ENCODE measurements at regions of chr11 and their contacts with region 1.

Region 1: DNA sequence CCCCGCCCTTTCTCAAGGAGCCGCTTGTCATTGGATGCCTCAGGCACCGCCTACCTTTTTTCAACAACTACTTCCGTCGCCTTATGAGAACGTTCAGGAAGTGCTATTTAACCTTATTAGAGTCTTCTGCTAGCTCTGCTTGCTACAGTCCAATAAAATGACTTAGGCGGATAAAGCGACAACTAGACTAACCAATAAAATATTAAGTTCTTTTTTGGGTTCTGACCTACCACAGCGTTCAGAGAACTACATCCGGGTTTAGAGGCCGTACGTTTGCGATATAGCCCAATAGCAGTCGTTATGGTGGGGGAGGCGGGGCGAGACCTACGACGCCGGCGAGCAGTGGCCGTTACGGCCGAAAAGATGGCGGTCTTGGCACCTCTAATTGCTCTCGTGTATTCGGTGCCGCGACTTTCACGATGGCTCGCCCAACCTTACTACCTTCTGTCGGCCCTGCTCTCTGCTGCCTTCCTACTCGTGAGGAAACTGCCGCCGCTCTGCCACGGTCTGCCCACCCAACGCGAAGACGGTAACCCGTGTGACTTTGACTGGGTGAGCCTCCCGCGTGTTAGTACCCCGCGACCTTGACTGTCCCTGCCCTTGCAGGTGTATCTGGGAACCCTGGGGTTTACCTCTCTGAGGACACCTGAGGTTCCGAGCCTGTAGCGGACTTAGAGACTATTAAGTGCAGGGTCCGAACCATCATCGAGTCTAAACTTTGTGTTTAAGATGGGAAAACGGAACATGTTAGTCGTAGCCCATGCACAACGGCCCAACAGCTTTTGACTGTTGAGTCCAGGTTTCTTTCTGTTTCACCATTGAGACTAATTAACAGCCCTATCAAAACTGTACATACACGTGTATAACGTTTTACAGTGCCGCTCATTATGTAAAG is at the start of gene TMX2:
- DNase-seq: peak; percentile 80 to 97
- H3K4me3 ChIP-seq: peak within 1 kb of the TSS; percentile 79 to 85
- H3K27ac ChIP-seq: peak within 1 kb of the TSS; percentile 82 to 89
- H3K4me1 ChIP-seq: peaks cover 16 to 29% of the 10 kb centered on the region in 2 donors
- H3K27me3 ChIP-seq: no peaks in the 10 kb centered on the region
- CTCF ChIP-seq: no peak
- total RNA-seq, gene TMX2: 65.3 TPM

Region 2: GRCh38 chr11:57523419-57523818 is 189.1 kb before region 1 on chr11:
- intact Hi-C with region 1: no loop called
- DNase-seq: no peak
- H3K4me3 ChIP-seq: no peak overlapping the region
- H3K27ac ChIP-seq: no peak overlapping the region
- H3K4me1 ChIP-seq: no peaks in the 10 kb centered on the region
- H3K27me3 ChIP-seq: no peaks in the 10 kb centered on the region
- CTCF ChIP-seq: no peak

Region 3: GRCh38 chr11:57567515-57568329 is 144.8 kb before region 1 on chr11 and contains the start of gene UBE2L6:
- intact Hi-C with region 1: loop called (anchors 1 kb)
- DNase-seq: peak; percentile 16 to 72
- H3K4me3 ChIP-seq: peak within 1 kb of the TSS; percentile 84 to 93
- H3K27ac ChIP-seq: peak within 1 kb of the TSS; percentile 78 to 82
- H3K4me1 ChIP-seq: peaks cover 6 to 20% of the 10 kb centered on the region in 2 donors
- H3K27me3 ChIP-seq: no peaks in the 10 kb centered on the region
- CTCF ChIP-seq: peak in 1 of 3 experiments; percentile 90
- total RNA-seq, gene UBE2L6: 44.9 TPM

Region 4: GRCh38 chr11:57657194-57658022 is 55.1 kb before region 1 on chr11 and contains the start of gene CLP1:
- intact Hi-C with region 1: loop called (anchors 2 kb)
- DNase-seq: peak; percentile 98 to 100
- H3K4me3 ChIP-seq: peak within 1 kb of the TSS; percentile 67 to 70
- H3K27ac ChIP-seq: peak within 1 kb of the TSS; percentile 87 to 88
- H3K4me1 ChIP-seq: peaks cover 0 to 6% of the 10 kb centered on the region in 2 donors
- H3K27me3 ChIP-seq: no peaks in the 10 kb centered on the region
- CTCF ChIP-seq: no peak
- total RNA-seq, gene CLP1: 1.2 TPM

Region 5: DNA sequence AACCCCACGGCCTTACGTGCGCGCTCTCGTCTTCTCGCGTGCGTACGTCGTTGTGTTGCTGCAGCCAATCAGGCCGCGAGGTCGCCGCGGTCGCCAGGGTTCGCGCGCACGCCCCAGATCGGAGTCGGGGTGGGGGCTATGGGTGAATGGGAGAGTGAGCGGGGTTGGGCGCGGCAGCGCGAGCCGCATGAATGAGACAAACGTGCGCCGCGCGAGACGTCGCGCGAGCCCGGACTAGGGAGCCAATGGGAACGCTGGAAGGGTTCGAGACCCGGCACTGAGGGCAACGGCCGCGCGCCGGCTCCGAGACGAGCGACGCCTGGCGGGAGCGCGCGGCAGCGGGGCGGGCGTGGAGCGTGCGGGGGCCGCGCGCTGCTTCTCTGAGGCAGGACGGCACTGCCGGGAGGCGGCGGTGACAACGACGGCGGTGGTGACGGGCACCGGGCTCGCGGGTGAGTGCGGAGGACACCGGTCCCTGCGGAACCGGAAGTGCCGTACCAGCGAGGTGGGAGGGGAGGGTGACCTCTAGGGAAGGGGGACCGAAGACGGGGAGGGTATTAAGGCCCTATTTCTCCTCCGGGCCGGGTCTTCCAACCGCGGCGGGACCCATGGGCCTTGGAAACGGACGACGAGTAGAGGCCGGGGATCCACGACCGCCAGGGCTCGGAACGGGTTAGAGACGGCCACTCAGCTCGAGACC is 44.6 kb before region 1 on chr11 and contains the start of gene ZDHHC5:
- intact Hi-C with region 1: loop called (anchors 1 kb)
- DNase-seq: peak; percentile 98 to 100
- H3K4me3 ChIP-seq: peak within 1 kb of the TSS; percentile 90 to 96
- H3K27ac ChIP-seq: peak within 1 kb of the TSS; percentile 98
- H3K4me1 ChIP-seq: peaks cover 6 to 16% of the 10 kb centered on the region in 2 donors
- H3K27me3 ChIP-seq: no peaks in the 10 kb centered on the region
- CTCF ChIP-seq: peak; percentile 33 to 69 (median 34)
- total RNA-seq, gene ZDHHC5: 26.2 TPM

Region 6: GRCh38 chr11:57680552-57680874 is 32.0 kb before region 1 on chr11:
- intact Hi-C with region 1: no loop called
- DNase-seq: no peak
- H3K4me3 ChIP-seq: no peak overlapping the region
- H3K27ac ChIP-seq: peak overlapping the region in 1 of 2 donors; percentile 1
- H3K4me1 ChIP-seq: peaks cover 0 to 9% of the 10 kb centered on the region in 2 donors
- H3K27me3 ChIP-seq: no peaks in the 10 kb centered on the region
- CTCF ChIP-seq: no peak

Region 7: DNA sequence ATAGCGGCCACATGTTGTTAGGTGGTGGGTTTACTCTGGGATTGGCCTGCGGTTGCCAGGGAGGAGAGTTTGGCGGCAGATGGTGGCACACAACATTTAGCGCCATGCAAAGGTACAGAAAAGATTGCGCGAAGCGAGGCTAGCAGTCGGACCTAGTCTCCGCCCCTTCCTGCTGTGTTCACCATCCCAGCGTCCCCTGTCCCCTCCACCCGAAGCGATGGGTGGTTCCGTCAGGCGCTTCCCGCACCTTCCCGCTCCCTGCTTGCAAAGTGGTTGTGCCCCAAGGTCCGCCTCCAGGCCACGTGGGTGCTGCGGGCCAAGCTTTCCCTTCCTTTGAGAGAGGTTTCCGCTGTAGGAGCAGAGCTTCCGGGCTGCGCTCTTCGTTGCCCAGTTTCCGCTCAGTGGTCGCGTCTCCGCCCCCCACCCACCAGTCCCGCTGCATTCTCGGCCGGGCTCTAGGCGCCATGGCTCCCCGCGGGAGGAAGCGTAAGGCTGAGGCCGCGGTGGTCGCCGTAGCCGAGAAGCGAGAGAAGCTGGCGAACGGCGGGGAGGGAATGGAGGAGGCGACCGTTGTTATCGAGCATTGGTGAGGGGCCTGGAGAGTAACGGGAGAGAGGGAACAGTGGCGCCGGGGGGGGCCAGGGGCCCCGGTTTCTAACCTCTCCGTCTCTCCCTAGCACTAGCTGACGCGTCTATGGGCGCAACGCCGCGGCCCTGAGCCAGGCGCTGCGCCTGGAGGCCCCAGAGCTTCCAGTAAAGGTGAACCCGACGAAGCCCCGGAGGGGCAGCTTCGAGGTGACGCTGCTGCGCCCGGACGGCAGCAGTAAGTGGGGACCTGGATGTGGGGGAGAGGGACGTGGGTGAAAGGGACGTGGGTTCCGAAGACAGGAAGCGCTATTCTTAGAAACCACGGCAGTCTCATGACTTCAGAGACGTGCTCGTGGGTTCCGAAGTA is 28.9 kb after region 1 on chr11 and contains the start of gene SELENOH:
- intact Hi-C with region 1: loop called (anchors 1 kb)
- DNase-seq: peak; percentile 84 to 98
- H3K4me3 ChIP-seq: peak within 1 kb of the TSS; percentile 91 to 93
- H3K27ac ChIP-seq: peak within 1 kb of the TSS; percentile 95 to 97
- H3K4me1 ChIP-seq: peaks cover 0 to 15% of the 10 kb centered on the region in 2 donors
- H3K27me3 ChIP-seq: no peaks in the 10 kb centered on the region
- CTCF ChIP-seq: no peak
- total RNA-seq, gene SELENOH: 113 TPM

Region 8: GRCh38 chr11:57761301-57762234 is 49.1 kb after region 1 on chr11 and contains the start of gene CTNND1:
- intact Hi-C with region 1: loop called (anchors 1 kb)
- DNase-seq: peak; percentile 68 to 95
- H3K4me3 ChIP-seq: peak within 1 kb of the TSS; percentile 66 to 79
- H3K27ac ChIP-seq: peak within 1 kb of the TSS; percentile 87 to 96
- H3K4me1 ChIP-seq: peaks cover 0 to 21% of the 10 kb centered on the region in 2 donors
- H3K27me3 ChIP-seq: no peaks in the 10 kb centered on the region
- CTCF ChIP-seq: no peak
- total RNA-seq, gene CTNND1: 69.5 TPM

Region 9: GRCh38 chr11:57800444-57801182 is 88.1 kb after region 1 on chr11:
- intact Hi-C with region 1: loop called (anchors 2 kb)
- DNase-seq: no peak
- H3K4me3 ChIP-seq: no peak overlapping the region
- H3K27ac ChIP-seq: peak overlapping the region in 1 of 2 donors; percentile 37
- H3K4me1 ChIP-seq: peaks cover 3 to 10% of the 10 kb centered on the region in 2 donors
- H3K27me3 ChIP-seq: no peaks in the 10 kb centered on the region
- CTCF ChIP-seq: peak; percentile 75 to 78 (median 76)

Region 10: DNA sequence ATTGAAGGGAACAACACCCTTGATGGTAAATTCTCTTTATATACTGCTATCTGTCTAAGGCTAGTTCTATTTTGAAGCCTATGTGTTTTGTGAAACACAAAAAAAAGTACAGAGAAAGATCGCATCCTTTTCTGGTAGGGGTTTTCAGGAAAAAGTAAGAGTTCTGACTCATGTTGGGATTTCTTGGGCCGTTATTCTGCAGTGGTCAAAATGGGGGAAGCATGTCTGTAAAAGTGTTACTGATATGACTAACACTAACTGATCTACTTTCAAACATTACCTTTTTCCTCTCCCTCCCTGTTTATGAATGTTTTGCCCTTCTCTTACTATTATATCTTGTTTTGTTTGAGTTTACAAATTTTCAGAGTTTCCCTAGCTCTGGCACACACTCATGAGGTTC is 103.0 kb after region 1 on chr11:
- intact Hi-C with region 1: no loop called
- DNase-seq: no peak
- H3K4me3 ChIP-seq: no peak overlapping the region
- H3K27ac ChIP-seq: no peak overlapping the region
- H3K4me1 ChIP-seq: no peaks in the 10 kb centered on the region
- H3K27me3 ChIP-seq: no peaks in the 10 kb centered on the region
- CTCF ChIP-seq: no peak